Transverse colon (tissue), 4 donors: ENCODE measurements at regions of chr19 and their contacts with region 1.

Region 1: GRCh38 chr19:1445185-1445931 is 4.6 kb upstream of the APC2 start:
- DNase-seq: peak; percentile 80
- H3K4me3 ChIP-seq: peak overlapping the region in 3 of 4 donors; percentile 7 to 43 (median 26)
- H3K27ac ChIP-seq: peak overlapping the region in 2 of 4 donors; percentile 12 to 20
- H3K4me1 ChIP-seq: peaks cover 9 to 28% (median 22%) of the 10 kb centered on the region in 4 donors
- H3K27me3 ChIP-seq: peaks cover 52% of the 10 kb centered on the region
- CTCF ChIP-seq: peak; percentile 64 to 98 (median 92)
- EP300 ChIP-seq: no peak
- POLR2A ChIP-seq: no peak

Region 2: GRCh38 chr19:1295169-1296012 is 150.0 kb before region 1 on chr19:
- in situ Hi-C with region 1: no loop called
- intact Hi-C with region 1: loop called (anchors 10 kb)
- DNase-seq: no peak
- H3K4me3 ChIP-seq: no peak overlapping the region
- H3K27ac ChIP-seq: no peak overlapping the region
- H3K4me1 ChIP-seq: peaks cover 11 to 27% (median 26%) of the 10 kb centered on the region in 4 donors
- H3K27me3 ChIP-seq: peaks cover 44% of the 10 kb centered on the region
- CTCF ChIP-seq: no peak
- EP300 ChIP-seq: no peak
- POLR2A ChIP-seq: no peak